ENCODE measurements at regions of chr6 and their contacts with region 1.

Region 1: GRCh38 chr6:3281631-3282475 is 23.1 kb downstream of the PSMG4 start:
- DNase-seq: no peak

Region 2: GRCh38 chr6:3585320-3585928 is 303.6 kb after region 1 on chr6:
- in situ Hi-C with region 1: no loop called
- DNase-seq: no peak

Region 3: GRCh38 chr6:3721810-3722626 is 440.2 kb after region 1 on chr6:
- in situ Hi-C with region 1: loop called (anchors 25 kb)
- DNase-seq: no peak

Region 4: GRCh38 chr6:3977875-3978711 is 696.2 kb after region 1 on chr6:
- in situ Hi-C with region 1: loop called (anchors 25 kb)
- DNase-seq: peak; percentile 96

Measured in SK-MEL-5 (cell line).